HepG2 (cell line): ENCODE measurements at regions of chr9 and their contacts with region 1.

Region 1: GRCh38 chr9:134434894-134435506 is 108.7 kb downstream of the RXRA start:
- DNase-seq: peak; percentile 97
- ATAC-seq: peak; percentile 85
- H3K4me3 ChIP-seq: peak overlapping the region; percentile 10 to 56 (median 27); a peak in 3 of 6 replicates
- H3K27ac ChIP-seq: peak overlapping the region; percentile 78
- H3K4me1 ChIP-seq: peaks cover 60% of the 10 kb centered on the region
- H3K27me3 ChIP-seq: no peaks in the 10 kb centered on the region
- CTCF ChIP-seq: no peak
- EP300 ChIP-seq: 0 out of 4 replicates have a peak, but pooled peaks of 1 of the 2 experiments have one; percentile 4
- POLR2A ChIP-seq: no peak
- RAD21 ChIP-seq: peak; percentile 19; the same call in 1 of the 2 replicates

Region 2: GRCh38 chr9:134333234-134333873 is 101.6 kb before region 1 on chr9:
- CTCF ChIA-PET with region 1: no interaction called
- POLR2A ChIA-PET with region 1: interaction called, 23 read pairs
- in situ Hi-C with region 1: no loop called
- intact Hi-C with region 1: loop called (anchors 2 kb)
- DNase-seq: peak; percentile 87
- ATAC-seq: peak; percentile 69
- H3K4me3 ChIP-seq: peak overlapping the region; percentile 35 to 67 (median 37); a peak in 5 of 6 replicates
- H3K27ac ChIP-seq: peak overlapping the region; percentile 74
- H3K4me1 ChIP-seq: peaks cover 97% of the 10 kb centered on the region
- H3K27me3 ChIP-seq: no peaks in the 10 kb centered on the region
- CTCF ChIP-seq: peak; percentile 11; the same call in 1 of the 2 replicates
- EP300 ChIP-seq: peak in 1 of 2 experiments; percentile 24; a peak in 1 of 4 replicates
- POLR2A ChIP-seq: no peak
- RAD21 ChIP-seq: no peak; the same call in 1 of the 2 replicates

Region 3: GRCh38 chr9:134381671-134382516 is 53.1 kb before region 1 on chr9:
- CTCF ChIA-PET with region 1: no interaction called
- POLR2A ChIA-PET with region 1: no interaction called
- in situ Hi-C with region 1: no loop called
- intact Hi-C with region 1: loop called (anchors 10 kb)
- DNase-seq: peak; percentile 21
- ATAC-seq: peak; percentile 40
- H3K4me3 ChIP-seq: peak overlapping the region in 1 of 3 experiments; percentile 33; a peak in 1 of 6 replicates
- H3K27ac ChIP-seq: no peak overlapping the region
- H3K4me1 ChIP-seq: peaks cover 50% of the 10 kb centered on the region
- H3K27me3 ChIP-seq: no peaks in the 10 kb centered on the region
- CTCF ChIP-seq: peak; percentile 30
- EP300 ChIP-seq: no peak
- POLR2A ChIP-seq: no peak
- RAD21 ChIP-seq: no peak; the same call in 1 of the 2 replicates

Region 4: GRCh38 chr9:134413890-134414731 is 20.9 kb before region 1 on chr9:
- CTCF ChIA-PET with region 1: no interaction called
- POLR2A ChIA-PET with region 1: no interaction called
- in situ Hi-C with region 1: no loop called
- intact Hi-C with region 1: no loop called
- DNase-seq: no peak
- ATAC-seq: no peak
- H3K4me3 ChIP-seq: no peak overlapping the region
- H3K27ac ChIP-seq: no peak overlapping the region
- H3K4me1 ChIP-seq: no peaks in the 10 kb centered on the region
- H3K27me3 ChIP-seq: no peaks in the 10 kb centered on the region
- CTCF ChIP-seq: no peak
- EP300 ChIP-seq: no peak
- POLR2A ChIP-seq: no peak
- RAD21 ChIP-seq: no peak

Region 5: GRCh38 chr9:134455934-134456739 is 21.1 kb after region 1 on chr9:
- CTCF ChIA-PET with region 1: no interaction called
- POLR2A ChIA-PET with region 1: no interaction called
- in situ Hi-C with region 1: no loop called
- intact Hi-C with region 1: no loop called
- DNase-seq: no peak
- ATAC-seq: no peak
- H3K4me3 ChIP-seq: no peak overlapping the region
- H3K27ac ChIP-seq: no peak overlapping the region
- H3K4me1 ChIP-seq: no peaks in the 10 kb centered on the region
- H3K27me3 ChIP-seq: peaks cover 2 to 43% of the 10 kb centered on the region in 2 experiments; a peak in 4 of 5 replicates
- CTCF ChIP-seq: no peak
- EP300 ChIP-seq: no peak
- POLR2A ChIP-seq: no peak
- RAD21 ChIP-seq: no peak

Region 6: DNA sequence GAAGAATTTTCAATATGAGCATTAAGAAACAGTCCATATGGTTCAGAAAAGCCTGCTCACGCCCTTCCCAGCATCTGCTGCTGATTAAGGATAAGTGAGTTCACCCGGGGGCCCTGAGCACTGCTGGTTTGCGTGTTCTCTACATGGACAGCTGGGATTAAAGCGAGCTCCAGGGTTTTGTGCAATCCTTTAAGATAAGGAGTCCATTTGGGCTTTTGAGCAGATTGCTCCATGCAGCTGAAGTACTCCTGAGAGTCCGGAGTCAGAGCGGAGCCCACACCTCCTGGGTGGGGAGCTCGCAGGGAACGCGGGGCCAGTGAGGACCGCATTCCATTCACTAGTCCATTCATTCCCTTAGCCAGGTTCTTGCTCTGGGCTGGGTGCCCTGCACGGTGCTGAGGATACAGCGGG is 57.3 kb after region 1 on chr9:
- CTCF ChIA-PET with region 1: no interaction called
- POLR2A ChIA-PET with region 1: no interaction called
- in situ Hi-C with region 1: no loop called
- intact Hi-C with region 1: no loop called
- DNase-seq: no peak
- ATAC-seq: no peak; the same call in 2 of the 3 replicates
- H3K4me3 ChIP-seq: no peak overlapping the region
- H3K27ac ChIP-seq: no peak overlapping the region
- H3K4me1 ChIP-seq: no peaks in the 10 kb centered on the region
- H3K27me3 ChIP-seq: peaks cover 17 to 83% of the 10 kb centered on the region in 2 experiments; a peak in 4 of 5 replicates
- CTCF ChIP-seq: no peak
- EP300 ChIP-seq: no peak
- POLR2A ChIP-seq: no peak
- RAD21 ChIP-seq: no peak

Region 7: GRCh38 chr9:134698587-134699342 is 263.8 kb after region 1 on chr9:
- CTCF ChIA-PET with region 1: no interaction called
- POLR2A ChIA-PET with region 1: no interaction called
- in situ Hi-C with region 1: no loop called
- intact Hi-C with region 1: no loop called
- DNase-seq: peak; percentile 50
- ATAC-seq: peak; percentile 88
- H3K4me3 ChIP-seq: no peak overlapping the region
- H3K27ac ChIP-seq: no peak overlapping the region
- H3K4me1 ChIP-seq: no peaks in the 10 kb centered on the region
- H3K27me3 ChIP-seq: peaks cover 4 to 47% of the 10 kb centered on the region in 2 experiments; a peak in 4 of 5 replicates
- CTCF ChIP-seq: peak; percentile 93
- EP300 ChIP-seq: no peak
- POLR2A ChIP-seq: no peak
- RAD21 ChIP-seq: peak; percentile 89